Posterior vena cava (tissue), 2 donors: ENCODE measurements at regions of chr15 and their contacts with region 1.

Region 1: GRCh38 chr15:54289590-54290136 is 311.4 kb downstream of the UNC13C start:
- DNase-seq: no peak

Region 2: GRCh38 chr15:54307252-54307902 is 17.7 kb after region 1 on chr15:
- intact Hi-C with region 1: no loop called
- DNase-seq: no peak

Region 3: GRCh38 chr15:54321426-54321825 is 31.8 kb after region 1 on chr15:
- intact Hi-C with region 1: loop called in 1 of 2 experiments (anchors 2 kb)
- DNase-seq: no peak

Region 4: DNA sequence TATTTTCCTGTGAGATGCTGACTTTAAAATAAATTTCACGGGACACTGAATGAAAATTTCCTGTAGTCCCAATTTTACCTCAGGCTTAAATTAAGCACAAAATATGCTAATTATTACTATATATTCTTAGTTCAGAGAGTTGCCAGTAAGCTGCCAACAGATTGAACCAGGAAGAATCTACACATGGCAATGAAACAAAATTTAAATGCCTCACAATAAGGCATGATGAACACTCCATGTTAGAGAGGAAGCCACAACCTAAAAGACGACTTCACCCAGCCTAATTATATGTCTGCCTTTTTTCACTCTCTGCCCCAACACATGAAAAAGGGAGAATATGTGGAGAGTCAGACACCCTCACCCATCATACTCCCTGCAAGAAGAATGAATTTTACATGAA is 1178.7 kb after region 1 on chr15:
- intact Hi-C with region 1: no loop called
- DNase-seq: no peak